ENCODE measurements at regions of chr2 and their contacts with region 1.

Region 1: DNA sequence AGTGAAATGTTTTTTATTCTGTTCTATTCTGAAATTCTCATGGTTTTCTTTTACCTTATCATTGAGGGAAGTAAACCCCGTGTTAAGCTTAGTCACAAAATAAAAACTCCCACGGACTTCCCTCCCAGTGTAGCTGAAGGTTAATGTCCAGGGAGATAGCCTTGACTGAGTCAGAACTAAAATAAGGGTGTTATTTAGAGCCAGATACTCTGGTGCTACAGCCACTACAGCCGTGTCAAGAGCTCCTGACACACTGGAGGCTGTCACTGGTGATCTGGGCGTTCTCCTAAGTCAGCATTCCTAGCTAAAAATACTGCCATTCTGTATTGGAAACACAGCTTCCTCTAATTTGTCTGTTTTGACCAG is 82.0 kb upstream of the RANBP2 start:
- DNase-seq: peak; percentile 97
- H3K4me3 ChIP-seq: no peak overlapping the region
- H3K27ac ChIP-seq: peak overlapping the region; percentile 77
- H3K4me1 ChIP-seq: peaks cover 68% of the 10 kb centered on the region
- H3K27me3 ChIP-seq: no peaks in the 10 kb centered on the region
- CTCF ChIP-seq: no peak
- POLR2A ChIP-seq: peak; percentile 55

Region 2: GRCh38 chr2:108351889-108352288 is 285.4 kb before region 1 on chr2:
- CTCF ChIA-PET with region 1: interaction called, 5 read pairs
- POLR2A ChIA-PET with region 1: no interaction called
- dilution Hi-C with region 1: no loop called
- intact Hi-C with region 1: loop called (anchors 1 kb)
- DNase-seq: no peak
- H3K4me3 ChIP-seq: no peak overlapping the region
- H3K27ac ChIP-seq: no peak overlapping the region
- H3K4me1 ChIP-seq: no peaks in the 10 kb centered on the region
- H3K27me3 ChIP-seq: peaks cover 15 to 23% of the 10 kb centered on the region in 2 experiments
- CTCF ChIP-seq: no peak
- POLR2A ChIP-seq: no peak

Region 3: DNA sequence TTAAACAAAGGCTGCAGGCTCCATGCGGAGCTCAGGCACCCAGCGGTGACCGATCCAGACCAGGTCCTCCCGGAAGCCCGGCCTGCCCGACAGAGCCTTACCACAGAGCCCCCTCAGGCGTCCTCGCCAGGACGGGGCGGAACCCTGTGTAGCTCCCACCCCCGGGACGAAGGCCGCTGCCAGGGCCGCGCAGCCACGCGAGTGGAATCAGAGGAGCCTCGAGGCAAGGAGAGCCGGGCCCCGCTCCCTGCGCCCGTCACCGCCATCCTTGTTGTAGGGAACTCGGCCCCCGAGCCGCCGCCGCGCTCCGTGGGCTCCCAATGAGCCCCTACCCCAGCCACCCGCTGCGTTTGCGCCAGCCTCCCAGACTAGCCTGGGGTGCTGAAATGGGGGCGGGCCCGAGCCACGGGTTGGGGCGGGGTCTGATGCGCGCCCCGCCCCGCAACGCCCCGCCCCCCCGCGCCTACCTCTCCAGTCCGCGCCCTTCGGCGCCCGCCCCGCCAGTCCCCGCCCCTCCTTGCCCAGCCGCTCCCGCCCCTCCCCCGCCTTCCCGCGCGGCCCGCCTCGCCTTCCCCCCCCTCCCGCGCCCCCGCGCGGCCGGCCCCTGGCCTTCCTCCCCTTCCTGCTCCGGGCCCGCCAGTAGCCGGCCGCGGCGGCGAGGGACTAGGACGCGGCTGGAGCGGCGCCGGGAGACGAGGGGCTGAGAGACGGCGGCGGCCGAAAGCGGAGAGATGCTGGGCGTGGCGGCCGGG is 103.3 kb before region 1 on chr2 and contains the start of gene LIMS1:
- CTCF ChIA-PET with region 1: interaction called, 4 read pairs
- POLR2A ChIA-PET with region 1: no interaction called
- dilution Hi-C with region 1: no loop called
- intact Hi-C with region 1: loop called (anchors 5 kb)
- DNase-seq: peak; percentile 90
- H3K4me3 ChIP-seq: peak within 1 kb of the TSS; percentile 65 to 84 (median 74)
- H3K27ac ChIP-seq: peak within 1 kb of the TSS; percentile 86
- H3K4me1 ChIP-seq: peaks cover 15% of the 10 kb centered on the region
- H3K27me3 ChIP-seq: no peaks in the 10 kb centered on the region
- CTCF ChIP-seq: no peak
- POLR2A ChIP-seq: peak; percentile 83
- total RNA-seq, gene LIMS1: 153 and 166 TPM in 2 replicates

Region 4: DNA sequence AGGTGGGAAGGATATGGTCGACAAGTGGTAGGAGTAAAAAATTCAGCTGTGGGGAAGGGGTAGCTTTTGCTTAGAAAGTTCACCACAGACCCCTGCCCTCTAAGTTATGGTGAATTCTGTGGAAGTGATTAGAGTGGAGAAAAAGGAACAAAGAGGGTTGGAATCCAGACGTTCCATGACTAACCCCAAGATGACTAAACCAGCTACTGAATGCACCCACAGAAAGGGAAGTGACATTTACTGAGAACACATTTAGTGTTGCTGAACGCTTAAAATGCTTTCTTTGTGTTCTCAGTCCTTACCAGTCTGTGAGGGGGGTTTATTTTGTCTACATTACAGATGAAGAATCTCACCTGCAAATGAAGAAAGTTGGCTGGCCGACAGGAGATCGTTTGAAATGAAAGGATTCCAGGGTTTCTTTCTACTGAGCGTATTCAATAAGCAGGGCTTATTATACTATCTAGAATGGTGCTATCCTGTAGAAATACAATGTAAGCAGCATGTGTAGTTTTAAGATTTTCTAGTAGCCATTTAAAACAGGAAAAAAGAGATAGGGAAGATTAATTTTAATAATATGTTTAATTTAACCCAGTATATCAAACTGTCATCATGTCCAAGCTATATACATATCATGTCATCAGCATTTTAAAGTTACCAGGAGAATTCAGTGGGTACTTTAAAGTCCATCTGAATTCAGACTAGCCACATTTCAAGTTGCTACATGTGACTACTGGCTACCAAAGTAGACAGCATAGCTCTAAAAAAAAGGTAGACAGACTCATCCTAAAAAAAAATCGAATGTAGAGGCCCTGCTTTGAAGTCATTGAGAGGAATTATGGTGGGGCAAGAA is 42.9 kb before region 1 on chr2:
- CTCF ChIA-PET with region 1: interaction called, 42 read pairs
- POLR2A ChIA-PET with region 1: interaction called, 10 read pairs
- dilution Hi-C with region 1: no loop called
- intact Hi-C with region 1: loop called (anchors 1 kb)
- DNase-seq: peak; percentile 91
- H3K4me3 ChIP-seq: peak overlapping the region in 1 of 3 experiments; percentile 48
- H3K27ac ChIP-seq: peak overlapping the region; percentile 99
- H3K4me1 ChIP-seq: peaks cover 59% of the 10 kb centered on the region
- H3K27me3 ChIP-seq: no peaks in the 10 kb centered on the region
- CTCF ChIP-seq: no peak
- POLR2A ChIP-seq: peak; percentile 79

Region 5: GRCh38 chr2:108607706-108608301 is 29.5 kb before region 1 on chr2:
- CTCF ChIA-PET with region 1: interaction called, 166 read pairs
- POLR2A ChIA-PET with region 1: no interaction called
- dilution Hi-C with region 1: no loop called
- intact Hi-C with region 1: loop called (anchors 1 kb)
- DNase-seq: peak; percentile 79
- H3K4me3 ChIP-seq: no peak overlapping the region
- H3K27ac ChIP-seq: no peak overlapping the region
- H3K4me1 ChIP-seq: no peaks in the 10 kb centered on the region
- H3K27me3 ChIP-seq: no peaks in the 10 kb centered on the region
- CTCF ChIP-seq: peak; percentile 57 to 60
- POLR2A ChIP-seq: no peak

Region 6: GRCh38 chr2:108621087-108621559 is 16.2 kb before region 1 on chr2:
- CTCF ChIA-PET with region 1: interaction called, 166 read pairs
- POLR2A ChIA-PET with region 1: interaction called, 12 read pairs
- dilution Hi-C with region 1: no loop called
- intact Hi-C with region 1: loop called (anchors 1 kb)
- DNase-seq: peak; percentile 69
- H3K4me3 ChIP-seq: no peak overlapping the region
- H3K27ac ChIP-seq: peak overlapping the region; percentile 2
- H3K4me1 ChIP-seq: peaks cover 56% of the 10 kb centered on the region
- H3K27me3 ChIP-seq: no peaks in the 10 kb centered on the region
- CTCF ChIP-seq: no peak
- POLR2A ChIP-seq: no peak

Measured in endothelial cell of umbilical vein (primary cell).